HepG2 (cell line): ENCODE measurements at regions of chr7 and their contacts with region 1.

Region 1: DNA sequence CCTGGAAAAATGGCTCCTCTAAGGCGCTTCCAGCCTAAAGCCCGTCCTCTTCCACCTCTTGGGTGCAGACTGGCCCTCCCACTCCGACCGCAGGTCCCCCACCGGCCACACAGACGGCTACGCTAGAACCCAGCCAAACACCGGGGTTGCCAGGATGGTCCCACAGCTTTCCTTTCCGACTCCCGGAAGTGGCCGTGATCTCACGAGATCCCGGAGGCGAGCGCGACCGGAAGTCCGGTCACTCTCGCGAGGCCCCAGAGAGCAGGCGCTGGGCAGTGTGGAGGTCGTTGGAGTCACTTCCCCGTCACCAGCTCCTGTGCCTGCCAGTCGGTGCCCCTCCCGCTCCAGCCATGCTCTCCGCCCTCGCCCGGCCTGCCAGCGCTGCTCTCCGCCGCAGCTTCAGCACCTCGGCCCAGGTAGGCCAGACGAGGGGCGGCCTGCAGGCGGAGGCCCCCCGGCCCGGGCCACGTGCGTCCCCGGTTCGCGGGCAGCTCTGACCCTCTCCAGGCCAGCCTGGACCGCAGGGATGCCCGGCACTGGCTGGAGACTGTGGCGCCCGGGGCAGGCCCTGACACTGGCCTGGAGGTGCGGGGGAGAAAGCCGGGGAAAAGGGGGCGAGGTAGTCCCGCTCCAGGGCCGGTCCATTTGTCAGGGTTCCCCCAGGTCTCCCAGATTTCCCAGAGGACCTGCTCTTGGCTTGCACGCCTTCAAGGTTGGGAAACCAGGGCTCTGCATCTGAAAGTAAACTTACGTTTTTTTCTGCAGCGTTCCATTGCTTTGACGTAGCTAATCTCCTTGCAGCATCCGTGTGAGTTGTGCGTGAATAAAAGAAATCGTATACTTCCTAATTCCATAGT is at the starts of genes MDH2 and STYXL1:
- DNase-seq: peak; percentile 95
- ATAC-seq: peak; percentile 97
- H3K4me3 ChIP-seq: peak within 1 kb of the TSS; percentile 86 to 98 (median 95)
- H3K27ac ChIP-seq: peak within 1 kb of the TSS; percentile 90
- H3K4me1 ChIP-seq: peaks cover 63% of the 10 kb centered on the region
- H3K27me3 ChIP-seq: no peaks in the 10 kb centered on the region; a peak in 1 of 5 replicates
- CTCF ChIP-seq: no peak; the same call in 1 of the 2 replicates
- EP300 ChIP-seq: 0 out of 4 replicates have a peak, but pooled peaks of 1 of the 2 experiments have one; percentile 16
- POLR2A ChIP-seq: peak; percentile 89 to 92
- RAD21 ChIP-seq: peak; percentile 13; the same call in 1 of the 2 replicates
- total RNA-seq, gene MDH2: 90.3 and 107 TPM in 2 replicates
- total RNA-seq, gene STYXL1: 23.9 and 28.0 TPM in 2 replicates

Region 2: DNA sequence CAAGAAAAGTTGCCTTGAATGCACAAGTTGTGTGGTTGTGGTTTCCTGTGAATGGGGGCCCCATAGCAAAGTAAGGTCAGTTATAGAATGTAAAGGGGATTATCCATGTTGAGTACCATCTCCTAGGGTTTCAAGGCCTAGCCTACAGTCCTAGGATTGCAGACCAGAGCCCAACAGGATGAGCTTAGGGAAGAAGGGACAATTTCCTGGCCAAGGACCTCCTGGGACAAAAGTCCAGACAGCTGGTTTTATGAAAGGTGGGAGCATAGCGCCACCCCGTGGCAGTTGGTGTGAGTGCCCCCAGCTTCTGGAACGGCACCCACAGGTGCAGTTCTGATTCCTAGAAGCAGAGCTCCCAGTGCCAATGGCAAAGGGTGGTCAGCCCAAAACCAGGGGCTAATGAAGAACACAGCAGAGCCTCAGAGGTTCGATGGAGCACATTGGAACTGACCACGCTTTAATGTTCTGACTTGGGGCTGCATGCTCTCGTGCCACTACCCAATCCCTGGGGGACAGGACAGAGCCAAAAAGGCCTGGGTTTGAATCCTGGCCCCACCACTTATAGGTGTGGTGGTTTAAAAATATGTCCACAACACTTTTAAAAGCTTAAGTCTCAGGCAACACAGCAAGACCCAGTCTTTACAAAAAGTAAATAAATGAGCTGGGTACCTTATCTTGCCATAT is 27.9 kb before region 1 on chr7:
- CTCF ChIA-PET with region 1: no interaction called
- POLR2A ChIA-PET with region 1: no interaction called
- in situ Hi-C with region 1: no loop called
- intact Hi-C with region 1: no loop called
- DNase-seq: peak; percentile 69
- ATAC-seq: peak; percentile 96
- H3K4me3 ChIP-seq: no peak overlapping the region
- H3K27ac ChIP-seq: no peak overlapping the region
- H3K4me1 ChIP-seq: peaks cover 8% of the 10 kb centered on the region
- H3K27me3 ChIP-seq: no peaks in the 10 kb centered on the region
- CTCF ChIP-seq: peak; percentile 98
- EP300 ChIP-seq: no peak
- POLR2A ChIP-seq: no peak
- RAD21 ChIP-seq: peak; percentile 93

Region 3: DNA sequence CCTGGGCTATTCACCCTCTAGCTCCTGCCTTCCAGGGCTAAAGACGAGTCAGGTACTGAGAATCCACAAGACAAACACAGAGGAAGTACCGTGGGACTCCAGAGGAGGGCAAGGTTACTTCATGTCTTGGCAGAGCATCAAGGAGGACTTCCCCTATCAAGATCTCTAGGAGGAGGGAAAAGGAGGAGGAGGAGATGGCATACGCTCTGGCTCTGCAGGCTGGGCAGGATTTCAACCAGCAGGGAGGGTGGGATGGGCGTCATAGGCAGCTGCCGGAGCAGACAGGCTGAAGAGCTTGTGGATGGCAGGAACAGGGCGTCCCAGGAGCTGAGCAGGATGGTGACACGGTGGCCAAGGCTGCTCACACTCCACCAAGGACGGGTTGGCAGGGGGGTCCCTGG is 21.2 kb after region 1 on chr7:
- CTCF ChIA-PET with region 1: no interaction called
- POLR2A ChIA-PET with region 1: interaction called, 13 read pairs
- in situ Hi-C with region 1: no loop called
- intact Hi-C with region 1: no loop called
- DNase-seq: no peak
- ATAC-seq: no peak
- H3K4me3 ChIP-seq: no peak overlapping the region
- H3K27ac ChIP-seq: no peak overlapping the region
- H3K4me1 ChIP-seq: peaks cover 21% of the 10 kb centered on the region
- H3K27me3 ChIP-seq: no peaks in the 10 kb centered on the region
- CTCF ChIP-seq: no peak
- EP300 ChIP-seq: no peak
- POLR2A ChIP-seq: peak in 1 of 2 experiments; percentile 41; a peak in 1 of 4 replicates
- RAD21 ChIP-seq: no peak

Region 4: GRCh38 chr7:76108540-76109241 is 60.7 kb after region 1 on chr7:
- CTCF ChIA-PET with region 1: no interaction called
- POLR2A ChIA-PET with region 1: interaction called, 16 read pairs
- in situ Hi-C with region 1: no loop called
- intact Hi-C with region 1: no loop called
- DNase-seq: peak; percentile 80
- ATAC-seq: peak; percentile 93
- H3K4me3 ChIP-seq: peak overlapping the region; percentile 70 to 95 (median 75)
- H3K27ac ChIP-seq: peak overlapping the region; percentile 75
- H3K4me1 ChIP-seq: peaks cover 52% of the 10 kb centered on the region
- H3K27me3 ChIP-seq: no peaks in the 10 kb centered on the region; a peak in 1 of 5 replicates
- CTCF ChIP-seq: no peak
- EP300 ChIP-seq: peak in 1 of 2 experiments; percentile 52; a peak in 2 of 4 replicates
- POLR2A ChIP-seq: peak; percentile 79 to 80
- RAD21 ChIP-seq: no peak

Region 5: DNA sequence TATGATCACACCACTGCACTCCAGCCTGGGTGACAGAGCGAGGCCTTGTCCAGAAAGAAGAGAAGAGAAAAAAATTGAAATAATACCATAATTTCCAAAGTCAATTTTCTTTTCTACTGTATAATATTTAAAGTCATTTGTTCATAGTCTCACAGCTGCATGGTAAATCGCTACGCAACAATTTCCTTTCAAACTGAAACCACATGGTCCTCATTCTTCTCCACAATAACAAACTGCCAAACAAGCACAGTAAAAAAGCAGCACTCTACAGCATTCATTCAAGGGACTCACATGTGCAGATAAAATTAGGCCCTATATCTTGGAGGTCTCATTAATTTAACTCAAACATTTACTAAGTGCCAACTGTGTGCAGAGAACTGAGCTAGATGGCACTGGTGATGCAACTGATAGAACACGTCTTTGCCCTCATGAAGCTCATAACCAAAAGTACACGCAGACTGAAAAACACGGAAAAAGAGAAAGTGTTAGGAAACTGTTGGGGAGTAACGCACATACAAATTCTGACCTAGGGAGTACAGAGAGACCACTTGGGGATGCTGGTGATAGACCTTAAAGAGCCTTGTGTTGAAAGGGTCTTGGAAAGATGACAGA is 85.2 kb after region 1 on chr7:
- CTCF ChIA-PET with region 1: no interaction called
- POLR2A ChIA-PET with region 1: interaction called, 4 read pairs
- in situ Hi-C with region 1: no loop called
- intact Hi-C with region 1: loop called (anchors 5 kb)
- DNase-seq: no peak
- ATAC-seq: no peak
- H3K4me3 ChIP-seq: no peak overlapping the region
- H3K27ac ChIP-seq: no peak overlapping the region
- H3K4me1 ChIP-seq: peaks cover 42% of the 10 kb centered on the region
- H3K27me3 ChIP-seq: no peaks in the 10 kb centered on the region
- CTCF ChIP-seq: no peak
- EP300 ChIP-seq: no peak
- POLR2A ChIP-seq: no peak
- RAD21 ChIP-seq: no peak

Region 6: GRCh38 chr7:76166404-76167255 is 118.6 kb after region 1 on chr7:
- CTCF ChIA-PET with region 1: no interaction called
- POLR2A ChIA-PET with region 1: interaction called, 14 read pairs
- in situ Hi-C with region 1: no loop called
- intact Hi-C with region 1: no loop called
- DNase-seq: peak; percentile 91
- ATAC-seq: peak; percentile 97
- H3K4me3 ChIP-seq: peak overlapping the region; percentile 66 to 82 (median 72); a peak in 5 of 6 replicates
- H3K27ac ChIP-seq: peak overlapping the region; percentile 75
- H3K4me1 ChIP-seq: peaks cover 24% of the 10 kb centered on the region
- H3K27me3 ChIP-seq: no peaks in the 10 kb centered on the region
- CTCF ChIP-seq: peak; percentile 66
- EP300 ChIP-seq: 0 out of 4 replicates have a peak, but pooled peaks of 1 of the 2 experiments have one; percentile 12
- POLR2A ChIP-seq: peak; percentile 81 to 85
- RAD21 ChIP-seq: 0 out of 2 replicates have a peak, but pooled peaks have one; percentile 20

Region 7: GRCh38 chr7:76317782-76318487 is 269.9 kb after region 1 on chr7:
- CTCF ChIA-PET with region 1: no interaction called
- POLR2A ChIA-PET with region 1: no interaction called
- in situ Hi-C with region 1: no loop called
- intact Hi-C with region 1: no loop called
- DNase-seq: peak; percentile 90
- ATAC-seq: peak; percentile 95
- H3K4me3 ChIP-seq: peak overlapping the region; percentile 58 to 86 (median 63)
- H3K27ac ChIP-seq: peak overlapping the region; percentile 73
- H3K4me1 ChIP-seq: peaks cover 36% of the 10 kb centered on the region
- H3K27me3 ChIP-seq: no peaks in the 10 kb centered on the region; a peak in 1 of 5 replicates
- CTCF ChIP-seq: no peak
- EP300 ChIP-seq: peak in 1 of 2 experiments; percentile 82; a peak in 2 of 4 replicates
- POLR2A ChIP-seq: peak; percentile 33 to 70; a peak in 3 of 4 replicates
- RAD21 ChIP-seq: no peak